Activated T-helper 1 cell treated with anti-CD3 and anti-CD28 coated beads, Interleukin-12 subunit alpha, Interleukin-12 subunit beta, Interleukin-2, Interleukin-4 antibody, amounts not matched to agents 30 ng/mL and 10 ng/mL and 1 ng/mL, durations not matched to agents 14 hours and 24 hours and 36 hours (primary cell): ENCODE measurements at regions of chr2 and their contacts with region 1.

Region 1: DNA sequence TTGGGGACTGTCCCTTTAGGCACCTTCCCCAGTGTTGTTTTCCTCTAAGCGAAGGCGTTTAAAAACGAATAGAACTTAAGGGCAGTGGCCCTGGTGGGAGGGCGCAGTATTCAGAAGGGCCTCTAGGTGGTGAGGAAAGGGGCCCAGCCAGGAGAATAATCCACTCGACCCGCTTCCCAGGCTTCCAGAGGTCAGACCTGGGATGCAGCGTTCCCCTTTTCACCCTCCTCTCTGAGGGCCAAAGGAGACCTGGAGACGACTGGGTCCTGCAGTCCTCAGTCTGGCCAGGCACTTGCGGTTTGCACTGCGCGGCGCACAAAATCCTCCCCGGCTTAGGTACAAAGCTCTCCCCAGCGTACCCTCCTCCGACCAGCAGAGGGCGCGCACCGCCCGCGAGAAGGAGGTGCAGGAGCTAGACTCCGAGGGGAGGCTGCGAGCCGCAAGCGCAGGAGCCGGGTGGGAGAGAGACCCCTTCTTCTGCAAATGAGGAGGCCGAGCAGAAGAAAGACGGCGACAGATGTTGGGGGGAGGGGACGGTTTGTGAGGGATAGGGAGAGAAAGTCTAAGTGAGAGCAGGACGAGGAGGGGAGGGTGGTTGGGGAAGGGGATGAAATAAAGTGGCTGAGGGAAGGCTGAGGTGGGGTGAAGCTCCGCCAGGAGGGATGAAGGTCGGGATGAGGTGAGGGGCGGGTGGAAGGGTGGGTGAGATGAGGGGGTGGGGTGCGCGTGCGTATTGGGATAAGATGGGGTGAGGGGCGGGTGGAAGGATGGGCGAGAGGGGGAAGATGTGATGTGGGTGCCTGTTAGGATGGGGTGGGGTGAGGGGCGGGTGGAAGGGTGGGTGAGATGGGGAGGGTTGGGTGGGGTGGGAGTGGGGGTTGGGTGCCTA is 4.9 kb downstream of the FEV start:
- DNase-seq: peak; percentile 68
- H3K4me3 Mint-ChIP-seq: no peak overlapping the region
- H3K27ac Mint-ChIP-seq: peak overlapping the region; percentile 79
- H3K4me1 Mint-ChIP-seq: peaks cover 6% of the 10 kb centered on the region
- H3K27me3 Mint-ChIP-seq: peaks cover 66% of the 10 kb centered on the region

Region 2: DNA sequence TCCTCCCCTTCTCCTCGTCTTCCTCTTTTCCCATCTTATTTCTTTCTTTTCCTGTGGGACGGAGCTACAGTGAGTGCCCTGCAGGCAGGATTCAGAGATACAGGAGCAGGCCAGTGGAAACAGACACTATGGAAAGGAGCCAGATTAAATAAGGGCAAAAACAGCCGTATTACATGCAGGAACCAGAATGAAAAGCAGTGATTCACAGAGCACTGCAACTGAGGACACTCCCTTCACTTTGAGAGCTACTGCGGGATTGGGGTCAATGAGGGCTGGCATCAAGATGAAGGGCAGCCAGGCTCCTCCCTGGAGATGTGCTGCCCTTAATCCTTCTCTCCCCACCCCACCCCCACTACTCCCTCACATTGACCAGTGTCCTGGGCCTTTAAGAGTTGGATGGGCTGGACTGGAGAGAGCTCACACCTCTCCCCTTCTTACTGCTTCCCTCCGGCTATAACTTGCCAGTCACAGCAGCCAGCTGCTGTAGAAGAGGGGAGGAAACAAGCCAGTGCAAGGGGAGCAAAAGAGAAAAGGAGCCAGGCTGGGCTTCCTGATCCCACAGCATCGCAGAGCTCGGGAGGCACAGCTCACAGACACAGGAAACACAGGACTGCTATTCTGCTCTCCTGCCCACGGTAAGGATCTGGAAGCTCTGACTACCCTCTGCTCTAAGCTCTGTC is 372.5 kb before region 1 on chr2 and contains the start of gene PLCD4:
- intact Hi-C with region 1: no loop called
- DNase-seq: no peak
- H3K4me3 Mint-ChIP-seq: no peak within 1 kb of the TSS
- H3K27ac Mint-ChIP-seq: no peak within 1 kb of the TSS
- H3K4me1 Mint-ChIP-seq: no peaks in the 10 kb centered on the region
- H3K27me3 Mint-ChIP-seq: peaks cover 10% of the 10 kb centered on the region
- total RNA-seq, gene PLCD4: 0.54 and 0.62 TPM in 2 replicates

Region 3: DNA sequence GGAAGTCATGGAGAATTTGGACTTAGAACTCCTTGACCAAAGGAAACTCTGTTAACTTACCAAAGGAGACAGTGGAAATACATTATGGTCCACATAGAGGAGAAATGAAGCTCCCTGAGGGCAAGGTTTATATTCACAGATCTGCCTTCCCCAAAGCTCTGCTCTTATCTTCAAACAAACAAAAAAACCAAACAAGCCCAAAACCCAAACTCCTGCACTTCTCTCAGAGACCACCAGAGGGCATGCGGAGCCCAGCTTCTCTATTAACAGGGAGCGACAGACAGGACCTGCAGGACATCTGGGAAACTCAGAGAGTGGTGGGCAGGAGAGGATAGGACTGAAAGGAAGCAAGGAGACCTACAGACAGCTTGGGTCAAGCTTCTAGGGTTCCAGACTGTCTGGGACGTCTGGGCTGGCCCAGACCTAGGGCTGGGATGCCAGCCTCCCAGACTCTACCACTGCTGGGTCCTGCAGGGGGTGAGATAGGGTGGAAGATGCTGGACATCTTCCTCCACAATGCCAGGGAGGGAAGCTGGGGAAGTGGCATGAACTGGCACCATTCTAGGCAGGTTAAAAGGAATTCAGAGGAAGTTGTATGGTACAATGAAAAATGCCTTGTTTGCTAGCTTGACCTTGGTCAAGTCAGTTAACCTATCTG is 103.4 kb before region 1 on chr2:
- intact Hi-C with region 1: loop called (anchors 2 kb)
- DNase-seq: peak; percentile 48
- H3K4me3 Mint-ChIP-seq: no peak overlapping the region
- H3K27ac Mint-ChIP-seq: no peak overlapping the region
- H3K4me1 Mint-ChIP-seq: peaks cover 16% of the 10 kb centered on the region
- H3K27me3 Mint-ChIP-seq: peaks cover 73% of the 10 kb centered on the region

Region 4: GRCh38 chr2:218995972-218996711 is 16.1 kb after region 1 on chr2:
- intact Hi-C with region 1: loop called (anchors 1 kb)
- DNase-seq: peak; percentile 63
- H3K4me3 Mint-ChIP-seq: peak overlapping the region; percentile 2
- H3K27ac Mint-ChIP-seq: no peak overlapping the region
- H3K4me1 Mint-ChIP-seq: no peaks in the 10 kb centered on the region
- H3K27me3 Mint-ChIP-seq: peaks cover 71% of the 10 kb centered on the region

Region 5: DNA sequence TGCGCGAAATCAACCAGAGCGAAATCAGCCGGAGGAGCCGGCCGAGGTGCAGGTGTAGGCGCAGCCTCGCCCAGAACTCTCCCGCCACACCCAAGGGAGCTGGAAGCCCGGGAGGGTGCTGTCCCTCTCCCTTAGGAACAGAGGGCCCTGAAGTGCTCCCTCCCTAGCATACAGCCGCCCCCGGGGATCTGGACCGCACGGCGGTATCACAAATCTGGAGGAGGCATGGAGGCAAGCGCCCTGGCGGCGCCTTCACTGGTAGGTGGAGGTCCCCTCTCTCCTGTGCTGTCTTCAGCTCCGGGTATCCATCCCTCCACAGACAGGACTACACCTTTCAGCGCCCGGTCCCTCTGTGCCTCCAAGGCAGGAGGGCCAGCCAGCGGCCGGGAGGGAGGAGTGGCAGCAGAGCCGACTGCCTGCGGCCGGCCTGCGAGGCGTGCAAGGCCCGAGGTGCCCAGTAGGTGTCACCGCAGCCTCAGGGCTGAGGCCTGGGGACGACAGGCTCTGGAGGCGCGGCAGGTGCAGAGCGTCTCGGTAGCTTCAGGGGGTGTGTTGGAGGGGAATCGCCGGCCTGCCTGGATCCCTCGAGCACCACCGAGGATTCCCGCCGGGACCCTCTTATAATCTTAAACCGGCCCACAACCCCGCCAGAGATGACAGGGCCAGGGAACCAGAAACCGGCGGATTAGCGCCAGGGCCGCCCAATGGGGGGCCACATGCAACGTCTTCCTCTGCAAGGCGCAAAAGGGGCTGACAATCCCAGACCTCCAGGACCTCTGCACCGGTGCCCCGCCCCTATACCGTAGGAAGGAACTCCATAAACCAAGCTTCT is 77.8 kb after region 1 on chr2:
- intact Hi-C with region 1: loop called (anchors 2 kb)
- DNase-seq: peak; percentile 68
- H3K4me3 Mint-ChIP-seq: peak overlapping the region; percentile 30
- H3K27ac Mint-ChIP-seq: no peak overlapping the region
- H3K4me1 Mint-ChIP-seq: no peaks in the 10 kb centered on the region
- H3K27me3 Mint-ChIP-seq: peaks cover 60% of the 10 kb centered on the region

Region 6: DNA sequence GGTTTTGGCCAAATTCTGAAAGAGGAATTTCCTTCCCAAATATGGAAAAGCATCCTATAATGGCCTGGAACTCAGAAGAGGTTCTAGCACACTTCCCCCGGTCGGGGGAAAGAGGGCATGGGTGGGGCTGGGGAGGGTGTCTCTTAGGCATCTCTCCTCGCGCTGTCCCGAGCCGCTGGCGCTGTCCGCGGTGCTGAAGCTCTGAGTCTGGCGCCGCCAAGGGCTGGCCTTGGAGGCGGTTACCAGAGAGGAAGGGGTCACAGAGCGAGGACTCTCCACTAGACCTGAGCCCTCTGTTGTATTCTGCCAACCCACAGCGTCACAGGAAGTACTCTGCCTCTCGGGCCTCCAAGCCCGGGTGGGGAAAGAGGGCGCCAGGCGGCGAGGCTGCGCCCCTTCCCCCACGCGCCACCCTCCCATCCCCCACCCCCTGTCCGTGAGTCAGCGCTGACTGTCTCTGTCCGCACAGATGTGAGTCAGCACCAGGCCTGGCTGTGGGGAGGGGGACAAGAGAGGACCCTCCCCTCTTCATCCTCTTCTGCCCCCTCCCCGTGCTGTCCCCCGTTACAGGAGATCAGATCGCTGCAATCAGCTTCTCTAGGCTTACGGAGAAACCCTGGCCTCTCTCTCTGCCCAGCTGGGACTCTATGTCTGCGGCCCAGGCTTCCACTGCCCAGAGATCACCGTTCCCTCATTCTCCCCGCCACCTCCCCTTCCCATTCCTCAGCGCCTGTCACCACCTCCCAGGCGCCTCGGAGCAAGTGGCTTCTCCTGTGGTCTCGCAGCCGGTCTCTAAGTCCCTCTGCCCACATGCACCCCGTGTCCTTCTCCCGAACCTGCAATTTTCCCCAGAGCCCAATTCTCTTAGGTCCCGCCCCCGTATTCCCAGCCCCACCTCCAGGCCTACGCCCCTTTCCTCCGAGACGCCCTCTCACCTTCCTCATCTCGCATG is 328.3 kb after region 1 on chr2:
- intact Hi-C with region 1: loop called (anchors 10 kb)
- DNase-seq: peak; percentile 63
- H3K4me3 Mint-ChIP-seq: no peak overlapping the region
- H3K27ac Mint-ChIP-seq: peak overlapping the region; percentile 50
- H3K4me1 Mint-ChIP-seq: no peaks in the 10 kb centered on the region
- H3K27me3 Mint-ChIP-seq: peaks cover 47% of the 10 kb centered on the region